B cell (primary cell): ENCODE measurements at regions of chr22 and their contacts with region 1.

Region 1: GRCh38 chr22:36856121-36856791 is 4.5 kb upstream of the NCF4 start:
- DNase-seq: peak; percentile 92
- ATAC-seq: peak; percentile 44
- H3K4me3 ChIP-seq: no peak overlapping the region
- H3K4me3 Mint-ChIP-seq: peak overlapping the region; percentile 66
- H3K27ac ChIP-seq: no peak overlapping the region
- H3K27ac Mint-ChIP-seq: peak overlapping the region; percentile 78
- H3K4me1 ChIP-seq: peaks cover 28 to 41% of the 10 kb centered on the region in 2 donors
- H3K4me1 Mint-ChIP-seq: peaks cover 39% of the 10 kb centered on the region
- H3K27me3 ChIP-seq: no peaks in the 10 kb centered on the region
- H3K27me3 Mint-ChIP-seq: no peaks in the 10 kb centered on the region
- CTCF ChIP-seq: peak; percentile 100

Region 2: DNA sequence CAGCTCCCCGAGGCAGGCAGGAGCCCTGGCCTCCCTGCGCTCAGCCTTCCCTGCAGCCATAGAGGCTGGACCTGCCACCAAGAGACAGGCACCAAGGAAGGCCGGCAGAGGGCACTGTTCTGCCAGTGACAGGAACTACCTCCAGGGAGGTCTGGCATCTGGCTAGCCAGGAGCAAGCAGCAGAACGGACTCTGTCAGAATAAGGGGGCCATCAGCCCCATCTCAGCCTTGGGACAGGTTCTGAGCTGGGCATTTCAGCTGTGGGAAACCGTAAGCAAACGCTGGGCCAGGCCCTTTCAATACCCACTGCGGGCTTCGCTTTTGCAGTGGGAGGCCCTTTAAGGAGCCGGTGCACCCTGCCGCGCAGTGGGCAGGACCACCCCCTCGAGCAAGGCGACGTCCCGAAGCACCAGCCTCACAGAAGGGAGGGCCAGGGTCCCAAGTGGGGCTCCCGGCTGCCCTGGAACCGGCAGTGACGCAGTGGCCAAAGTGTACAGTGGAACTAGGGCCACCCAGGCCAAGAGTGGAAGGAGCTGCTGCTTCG is 98.5 kb before region 1 on chr22:
- CTCF ChIA-PET with region 1: interaction called, 17 read pairs
- POLR2A ChIA-PET with region 1: no interaction called
- intact Hi-C with region 1: no loop called
- DNase-seq: peak; percentile 77
- ATAC-seq: peak; percentile 93
- H3K4me3 ChIP-seq: no peak overlapping the region
- H3K4me3 Mint-ChIP-seq: no peak overlapping the region
- H3K27ac ChIP-seq: no peak overlapping the region
- H3K27ac Mint-ChIP-seq: no peak overlapping the region
- H3K4me1 ChIP-seq: no peaks in the 10 kb centered on the region
- H3K4me1 Mint-ChIP-seq: no peaks in the 10 kb centered on the region
- H3K27me3 ChIP-seq: peaks cover 0 to 20% (median 1%) of the 10 kb centered on the region in 4 experiments
- H3K27me3 Mint-ChIP-seq: peaks cover 18% of the 10 kb centered on the region
- CTCF ChIP-seq: peak; percentile 84

Region 3: DNA sequence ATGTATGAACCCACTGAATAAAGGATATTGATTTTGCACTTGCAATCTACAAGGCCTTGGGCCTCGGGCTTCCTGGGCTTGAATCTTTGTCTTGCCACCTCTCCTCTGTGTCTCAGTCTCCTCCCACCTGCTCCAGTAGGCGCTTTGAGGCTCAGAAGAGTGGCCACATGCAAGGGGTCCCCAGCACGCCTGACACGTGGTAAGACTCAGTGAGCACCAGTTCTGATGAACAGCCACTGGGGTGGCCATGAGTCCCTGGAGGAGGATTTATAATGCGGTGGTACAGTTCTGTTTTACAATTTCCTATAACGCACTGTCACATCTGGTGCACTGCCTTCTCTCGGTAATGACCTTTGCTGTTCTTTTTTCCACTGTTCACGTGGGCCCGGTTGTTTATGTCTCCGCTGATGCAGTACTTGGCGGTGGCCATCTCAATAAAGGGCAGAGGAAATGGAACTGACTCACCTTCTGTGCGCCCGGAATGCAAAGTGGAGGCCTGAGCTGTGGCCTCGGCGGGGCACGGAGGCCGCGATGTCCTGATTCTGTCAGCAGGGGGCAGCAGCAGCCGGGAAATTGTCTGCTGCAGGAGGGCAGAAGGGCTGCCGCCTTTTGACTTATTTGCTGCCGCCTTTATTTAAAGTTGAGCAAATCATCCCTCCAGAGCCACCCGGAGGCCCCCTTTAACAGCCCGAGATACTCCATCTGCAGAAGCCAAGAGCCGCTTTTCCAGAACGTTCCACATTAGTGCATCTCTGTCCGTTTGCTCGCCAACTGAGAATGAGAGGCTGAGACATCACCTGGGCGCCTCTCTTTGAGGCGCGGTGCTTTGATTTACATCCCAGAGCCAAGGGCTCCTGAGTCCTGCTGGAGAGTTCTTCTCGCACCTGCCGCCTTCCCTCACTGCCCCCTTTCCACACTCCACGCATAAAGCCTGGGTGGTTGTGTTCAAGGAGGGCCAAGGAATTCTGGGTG is 74.3 kb before region 1 on chr22:
- CTCF ChIA-PET with region 1: interaction called, 115 read pairs
- POLR2A ChIA-PET with region 1: interaction called, 5 read pairs
- intact Hi-C with region 1: loop called (anchors 1 kb)
- DNase-seq: peak; percentile 86
- ATAC-seq: peak; percentile 97
- H3K4me3 ChIP-seq: no peak overlapping the region
- H3K4me3 Mint-ChIP-seq: peak overlapping the region; percentile 75
- H3K27ac ChIP-seq: no peak overlapping the region
- H3K27ac Mint-ChIP-seq: peak overlapping the region; percentile 96
- H3K4me1 ChIP-seq: peaks cover under 1 to 16% of the 10 kb centered on the region in 2 donors
- H3K4me1 Mint-ChIP-seq: peaks cover 13% of the 10 kb centered on the region
- H3K27me3 ChIP-seq: peaks cover 0 to 6% (median 0%) of the 10 kb centered on the region in 4 experiments
- H3K27me3 Mint-ChIP-seq: peaks cover 18% of the 10 kb centered on the region
- CTCF ChIP-seq: peak; percentile 96

Region 4: DNA sequence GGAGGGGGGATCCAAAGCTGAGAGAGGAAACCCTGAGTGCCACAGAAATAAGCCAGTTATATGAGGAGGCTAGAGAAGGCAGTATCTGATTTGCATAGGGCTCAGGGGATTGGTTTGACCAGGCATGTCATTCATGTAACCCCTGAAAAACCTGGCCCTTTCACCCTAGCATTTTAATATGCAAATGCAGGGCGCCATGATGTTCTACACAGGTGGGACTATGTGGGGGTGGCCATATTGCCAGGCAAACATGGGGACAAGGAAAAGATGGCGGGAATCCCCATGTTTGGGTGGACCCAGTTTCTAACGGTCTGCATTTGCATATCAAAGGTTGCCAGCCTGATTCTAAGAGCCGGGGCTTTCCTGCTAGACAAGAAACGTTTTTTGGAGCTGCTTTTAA is 84.4 kb after region 1 on chr22:
- CTCF ChIA-PET with region 1: interaction called, 5 read pairs
- POLR2A ChIA-PET with region 1: interaction called, 5 read pairs
- intact Hi-C with region 1: loop called (anchors 1 kb)
- DNase-seq: peak; percentile 76
- ATAC-seq: peak; percentile 84
- H3K4me3 ChIP-seq: peak overlapping the region in 2 of 5 experiments; percentile 26 to 45
- H3K4me3 Mint-ChIP-seq: peak overlapping the region; percentile 67
- H3K27ac ChIP-seq: peak overlapping the region; percentile 47 to 72
- H3K27ac Mint-ChIP-seq: peak overlapping the region; percentile 85
- H3K4me1 ChIP-seq: peaks cover 3 to 22% of the 10 kb centered on the region in 2 donors
- H3K4me1 Mint-ChIP-seq: peaks cover 36% of the 10 kb centered on the region
- H3K27me3 ChIP-seq: no peaks in the 10 kb centered on the region
- H3K27me3 Mint-ChIP-seq: no peaks in the 10 kb centered on the region
- CTCF ChIP-seq: no peak

Region 5: GRCh38 chr22:37012262-37012904 is 156.1 kb after region 1 on chr22:
- CTCF ChIA-PET with region 1: no interaction called
- POLR2A ChIA-PET with region 1: no interaction called
- intact Hi-C with region 1: no loop called
- DNase-seq: no peak
- ATAC-seq: no peak
- H3K4me3 ChIP-seq: no peak overlapping the region
- H3K4me3 Mint-ChIP-seq: no peak overlapping the region
- H3K27ac ChIP-seq: no peak overlapping the region
- H3K27ac Mint-ChIP-seq: no peak overlapping the region
- H3K4me1 ChIP-seq: no peaks in the 10 kb centered on the region
- H3K4me1 Mint-ChIP-seq: no peaks in the 10 kb centered on the region
- H3K27me3 ChIP-seq: no peaks in the 10 kb centered on the region
- H3K27me3 Mint-ChIP-seq: peaks cover 4% of the 10 kb centered on the region
- CTCF ChIP-seq: no peak